CD4-positive, alpha-beta T cell (primary cell): ENCODE measurements at regions of chr3 and their contacts with region 1.

Region 1: DNA sequence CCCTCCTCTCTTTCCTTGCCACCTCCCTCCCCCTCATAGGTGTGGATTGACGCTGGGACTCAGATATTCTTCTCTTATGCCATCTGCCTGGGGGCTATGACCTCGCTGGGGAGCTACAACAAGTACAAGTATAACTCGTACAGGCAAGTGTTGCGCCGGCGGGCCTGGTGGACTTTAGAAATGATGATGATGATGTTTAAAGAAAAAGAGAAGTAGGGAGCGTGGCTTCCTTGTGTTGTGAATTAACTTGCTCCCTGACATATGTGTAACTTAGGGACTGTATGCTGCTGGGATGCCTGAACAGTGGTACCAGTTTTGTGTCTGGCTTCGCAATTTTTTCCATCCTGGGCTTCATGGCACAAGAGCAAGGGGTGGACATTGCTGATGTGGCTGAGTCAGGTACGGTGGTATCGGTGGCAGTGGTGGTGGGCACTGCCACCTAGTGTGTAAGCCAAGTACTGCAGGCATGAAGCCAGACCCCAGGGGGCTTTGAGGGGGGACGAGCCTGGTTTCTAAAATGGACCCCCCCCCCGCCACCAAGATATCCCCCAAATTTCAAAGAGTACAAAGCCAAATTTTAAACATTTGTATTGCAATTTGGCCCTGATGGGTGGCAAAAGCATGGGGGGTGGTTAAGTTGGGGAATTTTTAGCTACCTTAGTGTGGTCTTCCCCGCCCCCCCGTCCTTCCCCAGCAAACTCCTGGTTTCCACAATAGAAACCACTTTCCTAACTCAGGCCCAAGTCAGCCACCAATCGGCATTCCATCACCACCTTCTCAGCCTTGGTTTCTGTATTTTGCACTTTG is 65.6 kb downstream of the SLC6A6 start:
- DNase-seq: peak; percentile 24 to 72 (median 40)
- ATAC-seq: peak; percentile 79
- H3K4me3 ChIP-seq: no peak overlapping the region
- H3K4me3 Mint-ChIP-seq: no peak overlapping the region
- H3K27ac ChIP-seq: no peak overlapping the region
- H3K27ac Mint-ChIP-seq: no peak overlapping the region
- H3K4me1 ChIP-seq: no peaks in the 10 kb centered on the region
- H3K4me1 Mint-ChIP-seq: no peaks in the 10 kb centered on the region
- H3K27me3 ChIP-seq: no peaks in the 10 kb centered on the region
- H3K27me3 Mint-ChIP-seq: no peaks in the 10 kb centered on the region
- CTCF ChIP-seq: peak; percentile 89

Region 2: DNA sequence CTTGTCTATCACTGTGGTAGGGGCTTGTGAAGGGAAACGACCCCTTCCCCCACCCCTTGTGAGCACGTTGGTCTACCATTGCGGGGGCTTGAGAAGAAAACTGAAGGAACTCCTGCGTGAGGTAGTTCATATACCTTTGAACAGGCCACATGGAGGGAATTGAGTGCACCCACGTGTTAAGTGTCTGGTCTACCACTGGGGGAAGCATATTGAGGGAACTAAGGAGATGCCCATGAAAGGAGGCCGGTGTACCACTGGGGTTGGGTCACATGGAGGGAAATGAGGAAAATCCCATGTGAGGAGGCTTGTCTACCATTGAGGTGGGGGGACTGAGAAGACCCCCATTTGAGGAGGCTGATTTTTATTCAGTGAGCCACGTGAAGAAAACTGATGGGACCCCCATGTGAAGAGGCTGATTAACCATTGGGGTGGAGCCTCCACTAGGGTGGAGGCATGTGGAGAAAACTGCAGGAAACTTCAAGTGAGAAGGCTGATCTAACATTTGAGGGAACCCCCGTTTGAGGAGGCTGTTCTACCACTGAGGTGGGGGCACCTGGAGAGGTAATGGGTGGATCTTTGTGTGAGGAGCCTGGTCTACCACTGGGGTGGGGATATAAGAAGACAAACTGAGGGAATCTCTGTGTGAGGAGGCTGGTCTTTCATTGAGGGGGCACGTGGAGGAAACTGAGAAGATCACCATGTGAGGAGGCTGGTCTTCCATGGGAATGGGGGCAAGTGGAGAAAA is 755.9 kb before region 1 on chr3:
- CTCF ChIA-PET with region 1: no interaction called
- POLR2A ChIA-PET with region 1: no interaction called
- intact Hi-C with region 1: no loop called
- DNase-seq: peak in 2 of 14 experiments; percentile 5
- ATAC-seq: no peak
- H3K4me3 ChIP-seq: no peak overlapping the region
- H3K4me3 Mint-ChIP-seq: no peak overlapping the region
- H3K27ac ChIP-seq: no peak overlapping the region
- H3K27ac Mint-ChIP-seq: no peak overlapping the region
- H3K4me1 ChIP-seq: no peaks in the 10 kb centered on the region
- H3K4me1 Mint-ChIP-seq: no peaks in the 10 kb centered on the region
- H3K27me3 ChIP-seq: no peaks in the 10 kb centered on the region
- H3K27me3 Mint-ChIP-seq: peaks cover 30% of the 10 kb centered on the region
- CTCF ChIP-seq: no peak

Region 3: DNA sequence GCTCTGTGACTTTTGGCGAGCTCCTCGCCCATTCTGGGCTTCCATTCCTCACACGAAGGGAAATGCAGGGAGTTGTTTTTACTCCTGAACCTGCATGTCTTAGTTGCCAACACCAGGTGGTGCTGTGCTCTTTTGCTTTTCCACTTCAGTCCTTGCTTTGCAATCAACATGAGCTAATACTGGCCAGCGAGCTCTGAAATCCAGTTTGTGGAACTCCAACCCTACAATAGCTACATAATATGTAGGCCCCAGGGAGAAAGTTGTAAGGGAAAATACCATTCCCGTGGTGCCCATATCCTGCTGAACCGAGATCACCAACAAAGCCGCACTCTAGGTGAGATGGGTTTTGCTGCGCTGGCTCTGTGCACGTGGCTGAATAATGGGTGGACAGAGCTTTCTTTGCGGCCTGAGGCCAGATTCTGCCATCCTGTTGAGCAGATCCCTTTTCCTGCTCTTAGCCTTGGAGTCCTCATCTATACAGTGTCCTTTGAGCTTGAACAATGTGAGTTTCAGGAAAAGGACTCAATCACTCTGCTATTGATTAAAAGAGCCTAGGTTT is 264.4 kb before region 1 on chr3:
- CTCF ChIA-PET with region 1: interaction called, 4 read pairs
- POLR2A ChIA-PET with region 1: no interaction called
- intact Hi-C with region 1: loop called (anchors 1 kb)
- DNase-seq: peak in 13 of 14 experiments; percentile 10 to 74 (median 26)
- ATAC-seq: peak; percentile 64
- H3K4me3 ChIP-seq: no peak overlapping the region
- H3K4me3 Mint-ChIP-seq: no peak overlapping the region
- H3K27ac ChIP-seq: no peak overlapping the region
- H3K27ac Mint-ChIP-seq: no peak overlapping the region
- H3K4me1 ChIP-seq: peaks cover 3% of the 10 kb centered on the region
- H3K4me1 Mint-ChIP-seq: no peaks in the 10 kb centered on the region
- H3K27me3 ChIP-seq: no peaks in the 10 kb centered on the region
- H3K27me3 Mint-ChIP-seq: no peaks in the 10 kb centered on the region
- CTCF ChIP-seq: peak; percentile 77